ENCODE measurements at regions of chr7 and their contacts with region 1.

Region 1: DNA sequence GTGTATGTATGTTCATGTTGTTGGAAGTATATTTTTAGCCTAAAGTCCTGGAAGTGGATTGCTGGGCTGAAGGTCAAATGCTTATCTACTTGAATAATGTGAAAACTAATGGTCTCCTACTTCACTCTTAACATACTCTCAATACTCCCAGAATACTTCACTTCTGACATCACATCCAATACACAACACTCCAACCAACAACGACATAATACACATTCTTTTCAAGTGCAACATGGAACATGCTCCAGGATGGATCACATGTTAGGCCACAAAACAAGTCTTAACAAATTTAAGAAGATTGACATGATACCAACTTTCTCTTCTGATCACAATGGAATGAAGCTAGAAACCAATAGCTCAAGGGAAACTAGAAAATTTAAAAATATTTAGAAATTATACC is 126.9 kb upstream of the ADCY1 start:
- DNase-seq: no peak
- H3K4me3 ChIP-seq: no peak overlapping the region
- H3K27ac ChIP-seq: no peak overlapping the region
- H3K4me1 ChIP-seq: no peaks in the 10 kb centered on the region
- H3K27me3 ChIP-seq: no peaks in the 10 kb centered on the region
- CTCF ChIP-seq: no peak
- EP300 ChIP-seq: no peak
- RAD21 ChIP-seq: no peak

Region 2: DNA sequence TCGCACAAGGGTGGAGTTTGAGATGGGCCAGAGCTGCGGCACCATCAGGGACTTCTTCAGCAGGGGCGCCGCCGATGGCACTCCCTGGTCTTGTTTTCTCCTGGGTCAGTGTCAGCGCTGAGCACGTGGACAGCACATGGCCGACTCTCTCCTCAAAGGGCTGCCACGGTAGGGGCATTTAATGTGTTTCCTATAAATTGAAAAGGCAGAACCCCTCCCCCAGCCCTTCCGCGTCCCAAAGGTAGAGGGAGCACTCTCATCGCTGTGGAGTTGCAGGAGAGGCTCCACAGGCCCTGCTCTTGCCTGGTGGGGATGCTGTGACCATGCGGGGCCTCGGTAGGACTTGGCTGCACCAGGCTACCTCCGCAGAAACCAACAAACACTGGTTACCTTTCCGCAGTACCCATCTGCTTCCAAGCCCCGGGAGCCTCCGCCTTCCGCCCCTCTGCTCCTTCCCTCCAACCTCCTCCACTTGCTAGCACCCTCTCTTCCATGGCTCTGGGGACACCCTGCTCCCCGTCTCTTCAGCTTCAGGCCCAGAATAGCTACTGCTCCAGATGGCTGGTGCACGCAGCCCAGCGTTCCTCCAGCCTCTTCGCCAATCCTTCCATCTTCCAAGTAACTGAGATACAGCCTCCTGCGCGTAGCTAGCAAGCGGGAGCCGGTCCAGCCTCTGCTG is 39.4 kb before region 1 on chr7:
- CTCF ChIA-PET with region 1: no interaction called
- POLR2A ChIA-PET with region 1: no interaction called
- DNase-seq: no peak
- H3K4me3 ChIP-seq: no peak overlapping the region
- H3K27ac ChIP-seq: no peak overlapping the region
- H3K4me1 ChIP-seq: peaks cover 0 to 3% of the 10 kb centered on the region in 2 experiments; a peak in 1 of 4 replicates
- H3K27me3 ChIP-seq: no peaks in the 10 kb centered on the region
- CTCF ChIP-seq: no peak
- EP300 ChIP-seq: no peak
- RAD21 ChIP-seq: peak; percentile 41

Region 3: GRCh38 chr7:45457577-45457976 is 10.3 kb after region 1 on chr7:
- CTCF ChIA-PET with region 1: interaction called, 14 read pairs
- POLR2A ChIA-PET with region 1: no interaction called
- DNase-seq: peak; percentile 44
- H3K4me3 ChIP-seq: no peak overlapping the region
- H3K27ac ChIP-seq: peak overlapping the region in 1 of 2 experiments; percentile 58; a peak in 2 of 4 replicates
- H3K4me1 ChIP-seq: peaks cover 0 to 28% of the 10 kb centered on the region in 2 experiments; a peak in 2 of 4 replicates
- H3K27me3 ChIP-seq: no peaks in the 10 kb centered on the region
- CTCF ChIP-seq: no peak
- EP300 ChIP-seq: no peak
- RAD21 ChIP-seq: no peak

Region 4: GRCh38 chr7:45479781-45480180 is 32.5 kb after region 1 on chr7:
- CTCF ChIA-PET with region 1: no interaction called
- POLR2A ChIA-PET with region 1: no interaction called
- DNase-seq: no peak
- H3K4me3 ChIP-seq: no peak overlapping the region
- H3K27ac ChIP-seq: no peak overlapping the region
- H3K4me1 ChIP-seq: peaks cover 0 to 10% of the 10 kb centered on the region in 2 experiments; a peak in 1 of 4 replicates
- H3K27me3 ChIP-seq: no peaks in the 10 kb centered on the region
- CTCF ChIP-seq: no peak
- EP300 ChIP-seq: no peak
- RAD21 ChIP-seq: 0 out of 2 replicates have a peak, but pooled peaks have one; percentile 9